Caco-2 (cell line): ENCODE measurements at regions of chr16 and their contacts with region 1.

Region 1: GRCh38 chr16:2429034-2429770 is at the start of gene CCNF:
- DNase-seq: peak; percentile 97 to 98
- H3K4me3 ChIP-seq: peak within 1 kb of the TSS; percentile 90
- H3K4me3 Mint-ChIP-seq: peak within 1 kb of the TSS; percentile 90
- H3K27ac Mint-ChIP-seq: peak within 1 kb of the TSS; percentile 92
- H3K4me1 ChIP-seq: peaks cover 15% of the 10 kb centered on the region
- H3K4me1 Mint-ChIP-seq: peaks cover 21% of the 10 kb centered on the region
- H3K27me3 ChIP-seq: no peaks in the 10 kb centered on the region
- H3K27me3 Mint-ChIP-seq: no peaks in the 10 kb centered on the region
- CTCF ChIP-seq: no peak
- total RNA-seq, gene CCNF: 48.7 and 52.4 TPM in 2 replicates

Region 2: GRCh38 chr16:2267913-2268666 is 161.1 kb before region 1 on chr16 and contains the start of gene RNPS1:
- CTCF ChIA-PET with region 1: no interaction called
- POLR2A ChIA-PET with region 1: no interaction called
- intact Hi-C with region 1: loop called (anchors 10 kb)
- DNase-seq: peak; percentile 91 to 94
- H3K4me3 ChIP-seq: peak within 1 kb of the TSS; percentile 79
- H3K4me3 Mint-ChIP-seq: peak within 1 kb of the TSS; percentile 96
- H3K27ac Mint-ChIP-seq: peak within 1 kb of the TSS; percentile 99
- H3K4me1 ChIP-seq: peaks cover 6% of the 10 kb centered on the region; the same call in 1 of the 2 replicates
- H3K4me1 Mint-ChIP-seq: peaks cover 13% of the 10 kb centered on the region
- H3K27me3 ChIP-seq: no peaks in the 10 kb centered on the region
- H3K27me3 Mint-ChIP-seq: no peaks in the 10 kb centered on the region
- CTCF ChIP-seq: no peak
- total RNA-seq, gene RNPS1: 207 and 210 TPM in 2 replicates

Region 3: DNA sequence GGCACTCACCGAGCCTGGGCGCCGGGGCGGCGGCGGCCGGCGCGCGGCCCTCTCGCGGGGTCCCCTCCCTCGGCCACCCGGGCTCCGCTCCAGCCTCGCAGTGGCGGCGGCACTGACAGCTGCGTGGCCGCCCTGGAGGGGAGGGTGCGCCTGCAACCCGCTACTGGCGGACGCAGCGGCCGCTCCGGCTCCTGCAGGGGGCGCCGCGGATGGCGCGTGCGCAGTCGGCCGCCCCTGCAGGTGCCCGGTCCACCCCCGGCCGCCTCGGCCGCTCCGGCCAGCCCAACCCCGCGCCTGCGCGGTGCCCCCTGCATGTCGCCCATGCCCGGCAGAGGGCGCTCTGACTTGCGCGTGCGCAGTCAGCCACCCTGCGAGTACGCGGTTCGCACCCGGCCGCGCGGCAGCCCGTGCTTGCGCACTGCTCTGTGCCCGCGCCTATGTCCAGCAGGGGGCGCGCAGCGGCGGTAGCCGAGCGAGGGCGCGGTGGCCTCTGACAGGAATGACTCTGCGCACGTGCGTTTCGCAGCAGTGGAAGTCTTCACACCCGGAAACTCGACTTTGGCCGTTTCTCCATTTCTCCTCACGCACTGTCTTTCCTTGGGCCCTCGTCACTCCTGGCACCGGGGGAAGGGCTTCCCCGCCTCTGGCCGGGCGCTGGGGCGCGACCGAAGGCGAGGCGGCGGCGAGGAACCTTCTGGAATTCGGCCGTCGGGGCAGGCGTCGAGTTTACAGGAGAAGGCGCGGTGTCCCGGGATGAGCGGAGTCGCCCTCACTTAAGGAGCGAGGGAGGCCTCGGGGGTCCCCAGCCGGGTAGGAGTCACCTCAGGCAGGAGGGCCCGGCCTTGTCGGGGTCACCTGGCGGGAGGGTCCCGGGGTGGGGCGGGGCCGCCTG is 88.4 kb before region 1 on chr16 and contains the start of gene ABCA3:
- CTCF ChIA-PET with region 1: no interaction called
- POLR2A ChIA-PET with region 1: no interaction called
- intact Hi-C with region 1: loop called (anchors 2 kb)
- DNase-seq: peak; percentile 91 to 99
- H3K4me3 ChIP-seq: peak within 1 kb of the TSS; percentile 83
- H3K4me3 Mint-ChIP-seq: peak within 1 kb of the TSS; percentile 91
- H3K27ac Mint-ChIP-seq: peak within 1 kb of the TSS; percentile 86
- H3K4me1 ChIP-seq: 0 out of 2 replicates have a peak, but pooled peaks cover 3% of the 10 kb centered on the region
- H3K4me1 Mint-ChIP-seq: no peaks in the 10 kb centered on the region
- H3K27me3 ChIP-seq: no peaks in the 10 kb centered on the region
- H3K27me3 Mint-ChIP-seq: peaks cover 3% of the 10 kb centered on the region
- CTCF ChIP-seq: peak; percentile 89 to 99
- total RNA-seq, gene ABCA3: 14.6 and 16.1 TPM in 2 replicates